ENCODE measurements at regions of chr10 and their contacts with region 1.

Region 1: GRCh38 chr10:43105102-43105785 is 28.4 kb downstream of the RET start:
- DNase-seq: no peak
- H3K4me3 ChIP-seq: peak overlapping the region; percentile 49 to 68
- H3K27ac ChIP-seq: no peak overlapping the region
- H3K4me1 ChIP-seq: peaks cover 16% of the 10 kb centered on the region
- H3K27me3 ChIP-seq: no peaks in the 10 kb centered on the region
- CTCF ChIP-seq: peak; percentile 93 to 99 (median 98)
- POLR2A ChIP-seq: no peak

Region 2: GRCh38 chr10:42753126-42753506 is 352.1 kb before region 1 on chr10:
- intact Hi-C with region 1: loop called (anchors 10 kb)
- DNase-seq: no peak
- H3K4me3 ChIP-seq: peak overlapping the region; percentile 51 to 55
- H3K27ac ChIP-seq: peak overlapping the region; percentile 69
- H3K4me1 ChIP-seq: peaks cover 35% of the 10 kb centered on the region
- H3K27me3 ChIP-seq: no peaks in the 10 kb centered on the region
- CTCF ChIP-seq: peak; percentile 73 to 84 (median 83)
- POLR2A ChIP-seq: no peak

Measured in vagina (tissue), 2 donors.